Activated CD4-positive, alpha-beta T cell treated with anti-CD3 and anti-CD28 coated beads, Interleukin-2, amount 10 ng/mL, durations not matched to agents 24 days and 14 days (primary cell): ENCODE measurements at regions of chr2 and their contacts with region 1.

Region 1: GRCh38 chr2:168490015-168490874 is 34.2 kb downstream of the CERS6 start:
- DNase-seq: peak; percentile 83
- H3K4me3 Mint-ChIP-seq: peak overlapping the region; percentile 80
- H3K27ac Mint-ChIP-seq: peak overlapping the region; percentile 80
- H3K4me1 Mint-ChIP-seq: peaks cover 40% of the 10 kb centered on the region
- H3K27me3 Mint-ChIP-seq: no peaks in the 10 kb centered on the region

Region 2: DNA sequence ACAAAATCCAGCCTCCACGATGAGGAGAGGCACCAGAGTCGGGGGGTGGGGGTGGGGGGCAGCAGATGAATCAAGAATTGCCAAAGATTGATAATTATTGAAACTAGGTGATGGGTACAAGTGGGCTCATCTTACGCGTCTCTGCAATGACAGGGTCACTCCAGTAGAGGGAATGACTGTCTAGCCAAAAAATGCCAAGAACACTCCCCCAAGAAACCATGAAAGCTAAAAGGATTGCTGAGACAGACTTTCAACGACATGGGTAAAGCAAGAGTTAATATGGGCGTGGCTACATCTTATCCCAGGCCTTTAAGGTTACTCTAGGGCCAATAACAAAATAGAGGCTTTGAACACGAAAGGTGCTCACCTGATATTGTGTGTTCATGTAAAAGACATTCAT is 329.3 kb before region 1 on chr2:
- intact Hi-C with region 1: loop called (anchors 10 kb)
- DNase-seq: no peak
- H3K4me3 Mint-ChIP-seq: no peak overlapping the region
- H3K27ac Mint-ChIP-seq: no peak overlapping the region
- H3K4me1 Mint-ChIP-seq: peaks cover 17% of the 10 kb centered on the region
- H3K27me3 Mint-ChIP-seq: no peaks in the 10 kb centered on the region

Region 3: GRCh38 chr2:168210895-168211570 is 279.2 kb before region 1 on chr2:
- intact Hi-C with region 1: loop called (anchors 2 kb)
- DNase-seq: no peak
- H3K4me3 Mint-ChIP-seq: peak overlapping the region; percentile 41
- H3K27ac Mint-ChIP-seq: peak overlapping the region; percentile 85
- H3K4me1 Mint-ChIP-seq: peaks cover 50% of the 10 kb centered on the region
- H3K27me3 Mint-ChIP-seq: no peaks in the 10 kb centered on the region

Region 4: GRCh38 chr2:168346725-168347477 is 143.3 kb before region 1 on chr2:
- intact Hi-C with region 1: loop called (anchors 5 kb)
- DNase-seq: peak; percentile 90
- H3K4me3 Mint-ChIP-seq: peak overlapping the region; percentile 84
- H3K27ac Mint-ChIP-seq: no peak overlapping the region
- H3K4me1 Mint-ChIP-seq: peaks cover 6% of the 10 kb centered on the region
- H3K27me3 Mint-ChIP-seq: peaks cover 21% of the 10 kb centered on the region

Region 5: DNA sequence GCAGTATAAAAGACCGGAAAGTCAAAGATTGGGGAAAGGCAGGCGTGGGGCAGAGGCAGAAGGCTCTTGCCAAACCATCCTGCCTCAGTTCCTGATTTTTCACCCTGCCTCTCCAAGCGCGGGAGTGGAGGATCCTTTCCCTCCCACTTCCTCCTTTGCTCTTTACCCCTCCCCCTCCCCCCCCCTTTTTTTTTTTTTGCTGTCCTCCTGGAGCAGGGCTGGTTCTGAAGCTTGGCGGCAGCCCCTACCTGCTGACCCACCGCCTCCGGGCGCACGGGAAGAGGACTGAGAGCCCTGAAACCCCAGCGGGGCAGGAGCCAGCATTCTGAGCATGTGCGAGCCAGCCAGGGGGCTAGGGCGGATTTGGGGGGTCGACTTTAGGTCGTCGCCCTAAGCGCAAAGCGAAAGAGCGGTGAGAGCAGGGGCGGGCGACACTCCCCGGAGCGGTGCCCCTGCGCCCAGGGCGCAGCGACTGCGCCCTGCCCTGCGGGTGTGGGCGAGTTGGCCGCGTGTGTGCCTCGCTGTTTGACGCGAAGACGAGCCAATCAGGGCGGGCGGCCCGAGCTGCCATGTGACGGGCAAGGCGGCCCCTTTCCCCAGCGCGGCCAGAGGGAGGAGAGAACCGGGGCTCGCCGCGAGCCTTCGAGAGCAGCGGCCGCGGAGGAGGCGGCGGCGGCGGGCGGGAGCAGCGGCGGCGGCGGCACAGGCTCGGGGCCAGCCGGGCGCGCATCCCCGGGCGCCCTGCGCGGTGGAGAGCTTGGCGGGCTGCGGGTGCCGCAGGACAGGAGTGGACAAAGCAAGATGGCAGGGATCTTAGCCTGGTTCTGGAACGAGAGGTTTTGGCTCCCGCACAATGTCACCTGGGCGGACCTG is 34.4 kb before region 1 on chr2 and contains the start of gene CERS6:
- intact Hi-C with region 1: loop called (anchors 1 kb)
- DNase-seq: peak; percentile 96
- H3K4me3 Mint-ChIP-seq: no peak within 1 kb of the TSS
- H3K27ac Mint-ChIP-seq: peak within 1 kb of the TSS; percentile 85
- H3K4me1 Mint-ChIP-seq: peaks cover 25% of the 10 kb centered on the region
- H3K27me3 Mint-ChIP-seq: no peaks in the 10 kb centered on the region
- total RNA-seq, gene CERS6: 25.3 and 26.3 TPM in 2 replicates

Region 6: DNA sequence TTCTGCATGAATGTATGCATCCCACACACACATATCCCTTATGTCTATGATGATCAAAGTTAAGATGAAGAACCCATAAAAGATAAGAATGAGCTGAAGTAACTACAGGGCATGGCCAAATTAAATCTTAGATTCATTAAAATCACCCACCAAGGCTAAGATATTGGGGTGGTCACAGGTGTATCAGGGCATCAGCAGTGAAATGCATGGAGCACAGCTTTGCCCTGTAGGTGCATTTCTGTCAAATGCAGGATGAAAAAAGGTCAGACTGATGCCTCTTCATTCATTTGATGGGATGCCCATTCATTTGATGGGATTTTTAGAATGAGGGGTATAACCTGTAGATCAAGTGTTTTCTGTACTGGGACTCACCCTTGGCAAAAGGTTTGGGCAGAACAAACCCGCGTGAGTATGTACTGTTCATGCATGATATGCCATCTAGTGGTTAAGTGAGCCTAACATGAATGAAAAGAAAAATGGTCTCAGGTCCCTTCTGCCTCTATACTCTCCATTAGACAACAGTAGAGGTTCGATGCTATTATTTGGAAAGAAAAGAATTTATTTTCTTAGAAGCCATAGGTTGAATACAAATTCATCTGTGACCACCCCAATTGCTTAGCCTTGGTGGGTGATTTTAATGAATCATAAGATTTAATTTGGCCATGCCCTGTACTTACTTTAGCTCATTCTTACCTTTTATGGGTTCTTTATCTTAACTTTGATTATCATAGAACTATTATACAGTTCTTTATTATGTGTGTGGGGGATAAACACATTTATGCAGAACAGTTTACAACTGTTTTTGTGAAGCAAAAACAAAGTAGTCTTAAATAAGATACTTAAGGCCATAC is 268.9 kb after region 1 on chr2:
- intact Hi-C with region 1: loop called (anchors 10 kb)
- DNase-seq: peak; percentile 71
- H3K4me3 Mint-ChIP-seq: no peak overlapping the region
- H3K27ac Mint-ChIP-seq: no peak overlapping the region
- H3K4me1 Mint-ChIP-seq: peaks cover 17% of the 10 kb centered on the region
- H3K27me3 Mint-ChIP-seq: no peaks in the 10 kb centered on the region